ENCODE measurements at regions of chr9 and their contacts with region 1.

Region 1: GRCh38 chr9:19554529-19554928 is 145.7 kb downstream of the ACER2 start:
- DNase-seq: no peak
- H3K4me3 ChIP-seq: no peak overlapping the region
- H3K27ac ChIP-seq: no peak overlapping the region
- H3K4me1 ChIP-seq: no peaks in the 10 kb centered on the region
- H3K27me3 ChIP-seq: no peaks in the 10 kb centered on the region
- CTCF ChIP-seq: no peak

Region 2: GRCh38 chr9:18896531-18897179 is 657.9 kb before region 1 on chr9:
- CTCF ChIA-PET with region 1: interaction called, 13 read pairs
- POLR2A ChIA-PET with region 1: no interaction called
- intact Hi-C with region 1: no loop called
- DNase-seq: no peak
- H3K4me3 ChIP-seq: no peak overlapping the region
- H3K27ac ChIP-seq: no peak overlapping the region
- H3K4me1 ChIP-seq: no peaks in the 10 kb centered on the region
- H3K27me3 ChIP-seq: no peaks in the 10 kb centered on the region
- CTCF ChIP-seq: no peak

Region 3: DNA sequence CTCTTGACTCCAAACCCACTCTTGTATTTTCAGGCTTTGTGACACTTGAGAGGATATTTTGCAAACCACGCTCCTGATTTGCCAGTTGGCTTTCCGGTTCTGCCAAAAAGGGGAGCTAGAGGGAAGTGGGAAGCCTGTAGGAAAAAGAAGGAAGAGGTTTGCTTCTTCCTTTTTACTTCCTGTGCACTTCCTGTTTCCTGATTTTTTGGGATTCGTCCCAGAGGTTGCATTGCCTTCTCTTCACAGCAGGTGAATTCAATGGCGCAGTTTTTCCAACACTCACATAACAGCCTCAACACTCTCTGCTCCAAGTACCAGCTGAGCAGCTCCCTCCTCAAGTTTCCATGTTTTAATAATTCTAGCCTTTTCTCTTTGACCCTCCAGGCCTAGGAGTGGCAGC is 186.6 kb after region 1 on chr9:
- CTCF ChIA-PET with region 1: no interaction called
- POLR2A ChIA-PET with region 1: no interaction called
- intact Hi-C with region 1: no loop called
- DNase-seq: no peak
- H3K4me3 ChIP-seq: no peak overlapping the region
- H3K27ac ChIP-seq: no peak overlapping the region
- H3K4me1 ChIP-seq: no peaks in the 10 kb centered on the region
- H3K27me3 ChIP-seq: no peaks in the 10 kb centered on the region
- CTCF ChIP-seq: no peak

Measured in A673 (cell line).